ENCODE measurements at regions of chr6 and their contacts with region 1.

Region 1: GRCh38 chr6:73798592-73798991 is 102.6 kb downstream of the CD109 start:
- DNase-seq: peak; percentile 85
- H3K4me3 ChIP-seq: no peak overlapping the region
- H3K27ac ChIP-seq: no peak overlapping the region
- H3K4me1 ChIP-seq: peaks cover 3% of the 10 kb centered on the region
- H3K27me3 ChIP-seq: no peaks in the 10 kb centered on the region
- CTCF ChIP-seq: peak; percentile 51 to 56

Region 2: GRCh38 chr6:73739096-73739495 is 59.5 kb before region 1 on chr6:
- CTCF ChIA-PET with region 1: no interaction called
- dilution Hi-C with region 1: no loop called
- in situ Hi-C with region 1: no loop called
- intact Hi-C with region 1: loop called (anchors 5 kb)
- DNase-seq: peak; percentile 23
- H3K4me3 ChIP-seq: no peak overlapping the region
- H3K27ac ChIP-seq: no peak overlapping the region
- H3K4me1 ChIP-seq: no peaks in the 10 kb centered on the region
- H3K27me3 ChIP-seq: no peaks in the 10 kb centered on the region
- CTCF ChIP-seq: peak; percentile 58 to 62